GM18951 (cell line): ENCODE measurements at regions of chrX and their contacts with region 1.

Region 1: GRCh38 chrX:52220936-52221335 is 36.2 kb downstream of the MAGED4 start:
- POLR2A ChIP-seq: no peak

Region 2: DNA sequence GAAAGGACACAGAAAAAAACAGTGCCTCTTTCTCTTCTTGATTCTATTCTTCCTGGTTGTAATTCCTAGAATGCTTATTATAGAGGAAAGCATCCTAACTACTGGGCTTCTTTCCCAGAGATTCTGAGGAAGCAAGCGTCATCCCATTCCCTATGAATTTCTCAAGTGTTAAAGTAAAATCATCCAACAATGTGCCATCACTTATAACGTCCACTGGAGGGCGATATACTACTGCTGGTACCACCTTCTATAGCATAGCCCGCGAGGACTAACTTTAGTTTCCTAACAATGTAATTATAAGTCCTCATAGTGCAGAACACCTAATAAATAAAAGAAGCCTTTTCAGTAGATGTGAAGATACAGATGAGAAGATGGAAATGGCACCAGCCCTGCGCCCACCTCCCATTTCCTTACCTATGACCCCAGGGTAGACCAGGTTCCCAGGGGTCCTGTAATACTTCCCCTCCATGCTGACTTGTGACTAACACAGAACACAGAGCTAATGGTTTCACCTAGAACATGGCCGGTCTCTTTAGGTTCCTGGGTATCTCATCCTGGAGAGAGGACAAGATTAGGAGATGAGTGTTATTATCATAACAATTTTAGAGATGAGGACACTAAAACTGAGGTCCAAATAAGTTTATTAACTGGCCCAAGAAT is 606.5 kb before region 1 on chrX:
- in situ Hi-C with region 1: loop called (anchors 25 kb)
- POLR2A ChIP-seq: no peak

Region 3: DNA sequence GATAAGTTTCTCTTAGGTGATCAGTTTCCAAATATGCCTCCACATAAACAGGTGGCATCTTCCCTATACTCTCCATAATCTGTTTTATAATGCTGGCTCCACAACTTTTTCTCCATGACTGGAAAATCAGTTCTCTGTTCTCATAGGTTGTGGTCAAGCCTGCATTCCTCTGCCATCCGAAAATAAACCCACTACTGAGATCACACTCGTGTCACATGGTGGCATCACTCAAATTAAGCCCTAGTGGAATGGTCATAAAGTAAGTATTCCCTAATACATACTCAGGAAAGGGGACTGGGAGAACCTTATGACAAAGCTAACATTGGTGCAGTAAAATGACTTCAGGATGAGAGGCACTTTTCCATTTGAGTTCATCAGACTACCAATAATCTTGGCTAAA is 189.6 kb before region 1 on chrX:
- in situ Hi-C with region 1: no loop called
- POLR2A ChIP-seq: no peak

Region 4: GRCh38 chrX:52363247-52363883 is 142.4 kb after region 1 on chrX:
- in situ Hi-C with region 1: no loop called
- POLR2A ChIP-seq: no peak